Activated naive CD4-positive, alpha-beta T cell treated with anti-CD3 and anti-CD28 coated beads for 36 hours (primary cell): ENCODE measurements at regions of chr1 and their contacts with region 1.

Region 1: DNA sequence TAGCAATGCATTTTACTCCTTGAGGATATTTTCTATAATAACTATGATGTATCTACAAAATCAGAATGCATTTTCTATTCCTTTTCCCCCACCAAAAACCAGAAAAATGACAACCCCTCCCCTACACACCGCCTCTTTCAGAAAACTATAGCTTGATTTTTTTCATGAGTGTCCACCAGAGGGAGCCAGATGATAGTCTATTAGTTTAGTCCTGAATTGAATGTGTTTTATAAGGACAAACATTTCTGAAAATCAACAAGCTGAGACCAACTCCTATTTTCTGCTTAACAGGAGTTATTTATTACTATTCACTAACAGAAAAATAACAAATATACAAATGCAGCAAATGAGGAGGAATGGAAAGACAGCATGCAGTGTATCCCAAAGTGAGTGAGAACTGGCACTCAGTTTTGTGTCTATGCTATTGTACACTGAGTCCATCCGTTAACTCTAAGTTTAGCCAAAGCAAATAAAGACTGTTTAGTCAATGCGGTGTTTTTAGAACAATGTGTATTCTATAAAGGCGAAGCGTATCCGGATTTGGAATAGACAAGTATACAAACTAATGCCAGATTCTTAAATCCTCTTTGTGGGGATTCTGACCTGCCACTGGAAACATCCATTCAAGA is 182.6 kb downstream of the VAV3 start:
- DNase-seq: peak; percentile 59
- H3K4me3 Mint-ChIP-seq: no peak overlapping the region
- H3K27ac Mint-ChIP-seq: no peak overlapping the region
- H3K4me1 Mint-ChIP-seq: peaks cover 23% of the 10 kb centered on the region
- H3K27me3 Mint-ChIP-seq: no peaks in the 10 kb centered on the region

Region 2: GRCh38 chr1:107795994-107796393 is 13.7 kb after region 1 on chr1:
- CTCF ChIA-PET with region 1: interaction called, 37 read pairs
- intact Hi-C with region 1: no loop called
- DNase-seq: peak; percentile 25
- H3K4me3 Mint-ChIP-seq: no peak overlapping the region
- H3K27ac Mint-ChIP-seq: no peak overlapping the region
- H3K4me1 Mint-ChIP-seq: peaks cover 25% of the 10 kb centered on the region
- H3K27me3 Mint-ChIP-seq: no peaks in the 10 kb centered on the region

Region 3: DNA sequence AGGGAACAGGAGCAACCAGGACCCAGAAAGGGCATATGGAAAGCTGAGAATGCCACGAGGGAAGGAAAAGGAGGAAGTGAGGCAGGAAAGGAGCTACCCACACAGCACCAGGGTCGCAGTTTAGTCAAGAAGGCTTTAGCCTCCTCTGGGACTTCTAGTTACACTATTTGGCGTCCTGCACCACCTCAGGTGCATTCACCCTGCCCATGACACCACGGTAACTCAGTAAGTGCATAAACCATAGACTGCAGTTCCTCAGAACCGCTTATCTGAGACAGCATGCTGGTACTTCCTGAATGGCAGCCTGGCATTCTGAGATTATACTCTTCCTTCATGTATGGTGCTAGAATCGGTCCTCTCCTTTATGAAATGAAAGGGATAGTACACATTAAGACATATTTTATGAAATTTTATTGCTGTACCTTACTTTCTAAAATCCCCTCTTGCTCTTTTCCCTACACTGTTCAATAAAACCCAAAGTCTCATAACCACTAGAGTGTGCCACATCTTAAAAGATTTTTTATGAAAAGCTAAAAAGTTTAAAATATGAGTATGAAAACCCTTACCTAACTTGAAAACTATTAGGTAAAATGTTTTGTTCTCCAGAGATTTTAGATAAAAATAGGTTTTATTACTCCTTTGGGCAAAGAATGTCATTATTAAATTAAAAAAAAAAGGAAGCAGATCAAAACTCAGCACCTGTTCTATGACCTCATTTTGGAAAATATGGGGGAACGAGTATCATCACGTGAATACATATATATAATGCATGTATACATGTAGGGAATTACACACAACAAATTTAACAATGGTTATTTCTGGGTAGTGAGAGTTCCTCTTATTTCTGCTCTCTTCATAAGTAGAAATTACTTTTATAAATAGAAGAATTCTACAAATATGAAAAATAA is 115.4 kb after region 1 on chr1:
- CTCF ChIA-PET with region 1: interaction called, 5 read pairs
- intact Hi-C with region 1: loop called (anchors 1 kb)
- DNase-seq: no peak
- H3K4me3 Mint-ChIP-seq: peak overlapping the region; percentile 25
- H3K27ac Mint-ChIP-seq: peak overlapping the region; percentile 78
- H3K4me1 Mint-ChIP-seq: peaks cover 40% of the 10 kb centered on the region
- H3K27me3 Mint-ChIP-seq: no peaks in the 10 kb centered on the region

Region 4: DNA sequence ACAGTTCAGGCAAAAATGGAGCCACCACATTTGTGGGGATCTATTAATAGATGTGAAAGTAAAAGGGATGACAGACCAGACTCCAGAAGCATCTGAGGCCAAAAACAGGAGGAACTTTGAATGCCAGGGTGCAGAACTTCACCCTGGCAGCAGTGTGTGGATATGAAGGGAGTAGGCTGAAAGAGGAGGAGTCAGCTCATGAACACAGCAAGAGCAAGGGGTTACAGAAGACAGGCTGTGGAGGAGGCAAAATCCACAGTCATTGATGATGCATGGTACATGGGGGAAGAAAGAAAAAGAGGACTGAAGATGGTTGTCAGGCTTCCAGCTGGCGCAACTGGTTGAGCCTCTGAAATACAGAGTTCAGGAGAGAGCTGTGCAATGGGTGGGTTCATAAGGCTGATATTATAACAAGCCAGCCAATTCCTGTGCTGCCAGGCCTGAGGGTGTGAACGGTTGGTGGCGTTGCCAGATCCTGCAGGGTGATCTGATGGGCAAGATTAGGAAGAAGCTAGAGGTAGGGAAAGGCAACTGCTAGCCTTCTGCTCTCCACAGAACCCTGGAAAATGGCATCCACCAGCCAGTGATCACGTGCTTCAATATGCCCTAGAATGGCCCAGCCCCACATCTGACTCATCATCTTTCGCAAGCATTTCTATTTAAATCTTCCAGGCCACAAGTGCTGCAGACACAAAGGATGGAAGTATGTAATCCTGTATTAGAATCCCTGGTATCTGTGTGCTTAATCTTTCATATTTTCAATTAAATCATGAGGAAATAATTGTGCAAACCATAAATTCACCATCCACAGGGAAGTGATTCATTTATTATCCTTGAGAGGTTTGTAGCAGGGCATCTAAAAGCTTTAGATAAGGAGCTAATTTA is 335.9 kb after region 1 on chr1:
- CTCF ChIA-PET with region 1: interaction called, 255 read pairs
- intact Hi-C with region 1: no loop called
- DNase-seq: peak; percentile 11
- H3K4me3 Mint-ChIP-seq: no peak overlapping the region
- H3K27ac Mint-ChIP-seq: no peak overlapping the region
- H3K4me1 Mint-ChIP-seq: peaks cover 7% of the 10 kb centered on the region
- H3K27me3 Mint-ChIP-seq: no peaks in the 10 kb centered on the region

Region 5: GRCh38 chr1:108199781-108200570 is 417.6 kb after region 1 on chr1 and contains the start of gene SLC25A24:
- CTCF ChIA-PET with region 1: interaction called, 12 read pairs
- intact Hi-C with region 1: loop called (anchors 1 kb)
- DNase-seq: peak; percentile 70
- H3K4me3 Mint-ChIP-seq: peak within 1 kb of the TSS; percentile 86
- H3K27ac Mint-ChIP-seq: no peak within 1 kb of the TSS
- H3K4me1 Mint-ChIP-seq: peaks cover 14% of the 10 kb centered on the region
- H3K27me3 Mint-ChIP-seq: no peaks in the 10 kb centered on the region
- total RNA-seq, gene SLC25A24: 5.2 to 5.5 TPM